MCF 10A (cell line): ENCODE measurements at regions of chr21 and their contacts with region 1.

Region 1: DNA sequence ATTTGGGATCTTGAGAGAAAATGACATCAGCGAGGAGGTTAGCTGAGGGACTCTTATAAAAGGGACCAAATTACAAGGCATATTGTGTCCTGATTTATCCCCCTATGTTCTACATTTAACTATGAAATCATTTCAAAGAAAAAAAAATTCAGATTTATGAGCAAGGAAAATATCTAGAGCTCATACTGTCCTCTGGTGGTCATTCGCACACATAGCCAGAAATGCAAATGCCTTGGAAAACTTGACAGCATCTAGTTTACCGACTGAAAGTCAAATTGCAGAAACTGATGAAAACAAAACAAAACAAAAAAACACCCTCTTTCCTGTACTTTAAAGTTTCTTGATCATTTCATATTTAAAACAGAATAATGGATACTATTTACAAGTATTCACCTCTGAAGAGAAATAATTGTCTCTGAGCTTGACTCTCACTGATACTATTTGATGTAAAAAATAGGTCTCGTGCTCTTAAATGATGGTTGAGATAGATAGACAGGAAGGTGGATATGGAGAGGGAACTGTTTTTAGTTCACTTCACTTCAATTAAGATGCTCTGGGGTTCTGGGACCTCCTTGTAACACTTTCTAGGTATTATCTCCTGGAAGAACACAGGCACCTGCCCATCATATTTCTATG is 253.8 kb downstream of the PCP4 start:
- DNase-seq: peak; percentile 7
- H3K4me3 Mint-ChIP-seq: no peak overlapping the region
- H3K27ac Mint-ChIP-seq: no peak overlapping the region
- H3K4me1 Mint-ChIP-seq: no peaks in the 10 kb centered on the region
- H3K27me3 Mint-ChIP-seq: peaks cover 13% of the 10 kb centered on the region
- CTCF ChIP-seq: peak; percentile 64

Region 2: DNA sequence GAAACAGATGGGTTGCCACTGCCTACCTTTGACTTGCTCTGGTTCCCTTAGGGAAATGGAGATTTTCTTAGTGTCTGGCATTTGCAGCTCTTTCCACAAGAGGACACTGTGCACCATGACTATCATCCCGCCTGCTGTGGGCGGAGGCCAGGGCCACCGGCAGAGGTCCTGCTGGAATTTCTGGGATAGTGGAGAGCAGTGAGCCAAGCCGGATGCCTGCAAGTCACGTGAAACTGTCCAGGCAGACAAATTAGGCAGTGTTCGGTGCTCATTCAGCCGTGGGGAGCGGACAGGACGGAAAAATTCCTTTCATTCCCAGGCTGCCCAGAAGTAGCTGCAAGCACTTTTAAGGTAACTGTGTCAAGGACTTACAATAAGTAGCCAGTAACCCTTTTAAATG is 332.7 kb before region 1 on chr21:
- CTCF ChIA-PET with region 1: interaction called, 30 read pairs
- POLR2A ChIA-PET with region 1: interaction called, 3 read pairs
- intact Hi-C with region 1: loop called (anchors 1 kb)
- DNase-seq: peak; percentile 40
- H3K4me3 Mint-ChIP-seq: peak overlapping the region; percentile 41
- H3K27ac Mint-ChIP-seq: no peak overlapping the region
- H3K4me1 Mint-ChIP-seq: no peaks in the 10 kb centered on the region
- H3K27me3 Mint-ChIP-seq: no peaks in the 10 kb centered on the region
- CTCF ChIP-seq: peak; percentile 81

Region 3: DNA sequence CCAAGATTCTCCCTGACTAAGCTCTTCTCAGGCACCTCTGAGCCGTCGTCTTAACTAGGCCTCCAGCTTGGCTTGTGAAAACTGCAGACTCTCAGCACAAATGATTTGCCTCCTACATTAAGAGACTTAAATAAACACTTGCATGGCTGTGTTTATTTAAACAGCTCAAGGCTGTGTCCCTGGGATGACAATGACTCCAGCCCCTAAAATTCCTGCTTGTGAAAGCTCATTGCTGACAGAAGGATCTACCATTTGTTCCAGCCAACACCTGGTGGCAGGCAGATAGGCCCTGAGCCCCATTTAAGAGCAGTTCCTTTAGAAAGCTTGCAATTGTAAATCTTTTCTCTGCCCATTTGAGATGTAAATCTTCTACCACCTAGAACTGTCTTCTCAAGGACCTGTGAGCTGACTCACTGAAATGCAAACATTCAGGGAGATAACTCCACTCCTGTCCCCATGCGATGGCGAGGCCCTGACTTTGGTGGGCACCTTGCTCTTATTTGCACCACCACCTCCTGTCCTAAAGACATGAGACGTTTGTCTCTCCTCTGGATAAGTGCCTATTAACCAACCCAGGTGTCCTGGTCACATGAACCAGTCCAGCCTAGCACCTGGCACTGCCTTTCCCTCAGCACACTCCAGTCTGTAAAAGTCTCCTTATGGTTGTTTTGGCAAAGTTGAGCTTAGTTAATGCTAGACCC is 268.9 kb before region 1 on chr21:
- CTCF ChIA-PET with region 1: interaction called, 10 read pairs
- POLR2A ChIA-PET with region 1: no interaction called
- intact Hi-C with region 1: no loop called
- DNase-seq: no peak
- H3K4me3 Mint-ChIP-seq: no peak overlapping the region
- H3K27ac Mint-ChIP-seq: no peak overlapping the region
- H3K4me1 Mint-ChIP-seq: peaks cover 6% of the 10 kb centered on the region
- H3K27me3 Mint-ChIP-seq: no peaks in the 10 kb centered on the region
- CTCF ChIP-seq: no peak

Region 4: GRCh38 chr21:39867198-39867650 is 253.8 kb before region 1 on chr21 and contains the start of gene PCP4:
- CTCF ChIA-PET with region 1: interaction called, 130 read pairs
- POLR2A ChIA-PET with region 1: interaction called, 3 read pairs
- intact Hi-C with region 1: loop called (anchors 1 kb)
- DNase-seq: peak; percentile 32
- H3K4me3 Mint-ChIP-seq: no peak within 1 kb of the TSS
- H3K27ac Mint-ChIP-seq: no peak within 1 kb of the TSS
- H3K4me1 Mint-ChIP-seq: no peaks in the 10 kb centered on the region
- H3K27me3 Mint-ChIP-seq: peaks cover 72% of the 10 kb centered on the region
- CTCF ChIP-seq: peak; percentile 76
- total RNA-seq, gene PCP4: not detected in 2 replicates